Ovary (tissue), 10 donors: ENCODE measurements at regions of chr15 and their contacts with region 1.

Region 1: GRCh38 chr15:101242160-101242998 is 9.5 kb downstream of the CHSY1 start:
- DNase-seq: no peak
- H3K4me3 ChIP-seq: no peak overlapping the region
- H3K27ac ChIP-seq: no peak overlapping the region
- H3K4me1 ChIP-seq: peaks cover 44% of the 10 kb centered on the region
- H3K27me3 ChIP-seq: no peaks in the 10 kb centered on the region
- CTCF ChIP-seq: no peak
- EP300 ChIP-seq: no peak
- POLR2A ChIP-seq: no peak

Region 2: DNA sequence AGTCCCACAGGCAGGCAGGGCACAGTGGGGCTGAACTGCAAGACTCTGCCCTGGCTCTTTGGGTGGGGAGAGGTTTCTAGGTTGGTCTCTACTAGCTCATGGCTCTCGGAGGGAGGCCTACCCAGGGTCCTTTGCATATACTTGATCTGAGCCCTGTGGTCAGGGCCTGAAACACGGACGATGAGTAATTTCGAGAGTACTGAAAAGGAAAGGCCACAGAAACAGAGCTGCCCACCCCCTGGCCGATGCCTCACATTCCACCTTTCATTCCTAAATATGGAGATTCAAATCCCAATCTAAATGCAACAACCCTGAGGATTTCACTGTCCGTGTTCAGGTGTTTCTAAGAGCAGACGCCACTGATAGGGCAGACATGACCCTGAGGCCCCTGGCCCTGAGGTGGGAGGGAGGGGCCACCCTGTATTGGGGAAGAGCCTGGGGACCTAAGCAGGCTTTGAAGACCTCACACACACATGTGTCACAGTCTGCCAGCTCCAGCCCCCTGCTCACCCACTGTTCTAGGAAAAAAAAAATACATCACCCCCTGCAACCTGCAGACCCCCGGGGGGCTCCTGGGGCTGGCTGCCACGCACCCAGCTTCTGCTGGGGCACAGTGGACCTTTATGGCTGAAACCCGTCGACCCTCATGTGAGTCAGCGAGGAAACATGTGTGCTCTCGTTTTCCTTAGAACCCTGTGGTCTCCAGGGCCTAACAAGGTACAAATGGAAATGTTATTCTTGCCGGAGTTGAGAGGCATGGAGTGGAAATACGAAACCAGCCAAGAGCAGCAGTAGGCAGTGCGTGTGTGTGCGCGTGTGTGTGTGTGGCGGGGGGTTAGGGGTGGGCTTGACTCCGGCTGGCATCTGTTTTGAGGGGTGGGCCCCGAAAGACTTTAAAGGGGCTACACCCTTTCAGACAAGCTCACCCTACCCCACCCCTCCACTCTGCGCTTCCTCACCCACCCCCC is 103.2 kb before region 1 on chr15:
- intact Hi-C with region 1: loop called in 1 of 4 experiments (anchors 10 kb)
- DNase-seq: no peak
- H3K4me3 ChIP-seq: no peak overlapping the region
- H3K27ac ChIP-seq: peak overlapping the region in 1 of 2 donors; percentile 62
- H3K4me1 ChIP-seq: no peaks in the 10 kb centered on the region
- H3K27me3 ChIP-seq: no peaks in the 10 kb centered on the region
- CTCF ChIP-seq: no peak
- EP300 ChIP-seq: no peak
- POLR2A ChIP-seq: no peak

Region 3: DNA sequence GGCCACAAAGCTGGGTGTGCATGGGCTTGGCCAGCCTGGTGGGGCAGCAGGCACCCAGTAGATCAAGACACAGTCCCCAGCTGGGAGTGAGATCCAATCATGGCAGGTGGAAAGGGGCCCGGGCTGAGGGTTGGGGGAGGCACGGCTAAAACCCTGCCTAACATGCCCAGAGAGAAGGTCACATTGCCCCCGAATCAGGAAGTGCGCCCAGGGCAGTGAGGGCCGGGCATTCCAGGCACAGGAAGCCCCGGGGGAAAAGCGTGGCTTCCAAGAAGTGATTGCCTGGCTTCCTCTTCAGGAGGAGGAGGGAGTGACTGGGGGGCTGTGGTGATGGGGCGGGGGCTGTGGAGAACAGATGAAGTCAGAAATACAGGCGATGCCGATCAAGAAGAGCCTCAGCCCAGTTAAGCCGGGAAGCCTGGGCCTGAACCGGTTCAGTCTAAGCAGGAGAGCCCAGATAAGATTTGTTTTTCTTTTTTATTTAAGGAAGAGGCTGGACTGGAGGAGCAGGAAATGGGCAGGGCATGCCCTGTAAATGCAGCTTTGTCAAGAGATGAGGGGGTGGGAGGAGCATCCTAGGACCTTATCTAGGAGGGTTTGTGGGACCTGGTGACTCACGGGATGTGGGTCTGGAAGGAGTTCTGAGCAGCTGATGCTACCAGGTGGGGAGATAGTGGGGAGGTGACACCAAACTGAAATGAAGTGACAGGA is 74.5 kb before region 1 on chr15:
- intact Hi-C with region 1: loop called in 1 of 4 experiments (anchors 10 kb)
- DNase-seq: peak in 3 of 5 donors; percentile 49 to 60 (median 52)
- H3K4me3 ChIP-seq: no peak overlapping the region
- H3K27ac ChIP-seq: no peak overlapping the region
- H3K4me1 ChIP-seq: peaks cover 9% of the 10 kb centered on the region
- H3K27me3 ChIP-seq: no peaks in the 10 kb centered on the region
- CTCF ChIP-seq: no peak
- EP300 ChIP-seq: peak; percentile 84
- POLR2A ChIP-seq: no peak

Region 4: GRCh38 chr15:101179341-101180153 is 62.8 kb before region 1 on chr15:
- intact Hi-C with region 1: loop called in 2 of 4 experiments (anchors 5 to 10 kb)
- DNase-seq: no peak
- H3K4me3 ChIP-seq: no peak overlapping the region
- H3K27ac ChIP-seq: no peak overlapping the region
- H3K4me1 ChIP-seq: peaks cover 7% of the 10 kb centered on the region
- H3K27me3 ChIP-seq: no peaks in the 10 kb centered on the region
- CTCF ChIP-seq: no peak
- EP300 ChIP-seq: no peak
- POLR2A ChIP-seq: no peak

Region 5: DNA sequence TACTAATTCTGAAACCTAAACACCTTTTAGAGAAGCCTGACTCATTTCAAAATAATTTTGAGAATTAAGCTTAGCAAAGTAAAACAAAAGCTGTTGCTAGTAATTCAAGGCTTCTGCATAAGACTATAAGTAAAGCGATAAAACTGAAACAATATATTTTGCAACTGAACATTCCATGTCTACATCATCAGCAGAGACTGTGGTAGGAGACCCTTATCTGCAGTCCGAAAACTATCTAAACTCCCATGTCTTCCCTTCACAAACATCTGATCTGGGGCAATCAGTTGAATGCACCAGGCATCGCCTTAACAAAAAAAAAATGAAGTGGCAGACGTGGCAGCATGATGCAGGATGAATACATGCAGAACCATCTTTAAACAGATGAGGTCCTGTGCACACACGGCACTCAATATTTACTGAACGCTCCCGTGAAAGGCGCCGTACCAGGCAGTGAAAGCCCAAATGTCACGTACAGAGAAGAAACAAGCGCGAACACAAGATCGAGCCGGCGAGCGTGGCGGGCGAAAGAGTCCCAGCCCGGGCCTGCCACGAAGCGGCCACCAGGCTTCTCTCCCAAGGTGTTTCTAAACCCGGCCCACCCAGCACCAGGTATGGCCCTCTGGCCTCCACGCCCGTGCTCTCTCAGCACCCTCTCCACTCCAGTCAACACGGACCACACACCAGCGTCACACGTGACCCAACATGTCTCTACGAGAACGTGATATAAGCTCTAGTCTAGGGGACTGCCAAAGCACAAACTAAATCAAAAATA is 53.6 kb before region 1 on chr15:
- intact Hi-C with region 1: loop called in 2 of 4 experiments (anchors 5 to 10 kb)
- DNase-seq: peak; percentile 61 to 69 (median 65)
- H3K4me3 ChIP-seq: peak overlapping the region; percentile 13
- H3K27ac ChIP-seq: peak overlapping the region; percentile 79
- H3K4me1 ChIP-seq: peaks cover 34% of the 10 kb centered on the region
- H3K27me3 ChIP-seq: no peaks in the 10 kb centered on the region
- CTCF ChIP-seq: no peak
- EP300 ChIP-seq: no peak
- POLR2A ChIP-seq: no peak

Region 6: GRCh38 chr15:101198800-101199199 is 43.6 kb before region 1 on chr15:
- intact Hi-C with region 1: loop called in 2 of 4 experiments (anchors 5 to 10 kb)
- DNase-seq: peak in 1 of 5 donors; percentile 50
- H3K4me3 ChIP-seq: no peak overlapping the region
- H3K27ac ChIP-seq: peak overlapping the region in 1 of 2 donors; percentile 51
- H3K4me1 ChIP-seq: peaks cover 20% of the 10 kb centered on the region
- H3K27me3 ChIP-seq: no peaks in the 10 kb centered on the region
- CTCF ChIP-seq: no peak
- EP300 ChIP-seq: no peak
- POLR2A ChIP-seq: no peak